ENCODE measurements at regions of chr3 and their contacts with region 1.

Region 1: GRCh38 chr3:155323063-155323666 is 29.7 kb upstream of the STRIT1 start:
- DNase-seq: peak in 3 of 5 donors; percentile 2 to 9 (median 6)
- H3K4me3 ChIP-seq: no peak overlapping the region
- H3K4me3 Mint-ChIP-seq: no peak overlapping the region
- H3K27ac ChIP-seq: no peak overlapping the region
- H3K27ac Mint-ChIP-seq: no peak overlapping the region
- H3K4me1 ChIP-seq: no peaks in the 10 kb centered on the region
- H3K4me1 Mint-ChIP-seq: no peaks in the 10 kb centered on the region
- H3K27me3 ChIP-seq: no peaks in the 10 kb centered on the region
- H3K27me3 Mint-ChIP-seq: no peaks in the 10 kb centered on the region

Region 2: DNA sequence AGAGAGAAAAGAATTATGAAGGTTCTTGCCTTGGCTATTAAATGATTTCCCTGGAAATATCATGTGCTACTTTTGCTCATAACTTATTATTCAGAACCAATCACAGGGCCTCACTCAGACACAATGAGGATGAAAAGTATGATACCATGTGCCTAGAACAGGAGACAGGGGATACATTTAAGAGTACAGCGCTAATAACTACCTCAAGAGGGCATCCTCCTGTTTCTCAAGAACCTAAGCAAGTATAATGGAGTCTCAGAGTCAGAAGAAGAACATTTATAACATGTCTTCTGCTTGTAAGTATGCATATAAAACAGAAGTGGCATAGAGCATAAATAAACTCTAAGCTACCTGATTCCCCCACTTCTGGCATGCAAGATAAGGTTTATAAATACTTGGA is 368.4 kb before region 1 on chr3:
- CTCF ChIA-PET with region 1: interaction called, 10 read pairs
- POLR2A ChIA-PET with region 1: no interaction called
- intact Hi-C with region 1: no loop called
- DNase-seq: peak in 1 of 5 donors; percentile 1
- H3K4me3 ChIP-seq: no peak overlapping the region
- H3K4me3 Mint-ChIP-seq: no peak overlapping the region
- H3K27ac ChIP-seq: no peak overlapping the region
- H3K27ac Mint-ChIP-seq: no peak overlapping the region
- H3K4me1 ChIP-seq: no peaks in the 10 kb centered on the region
- H3K4me1 Mint-ChIP-seq: no peaks in the 10 kb centered on the region
- H3K27me3 ChIP-seq: no peaks in the 10 kb centered on the region
- H3K27me3 Mint-ChIP-seq: no peaks in the 10 kb centered on the region